ENCODE measurements at regions of chr1 and their contacts with region 1.

Region 1: GRCh38 chr1:43763497-43763973 is 56.2 kb downstream of the ST3GAL3 start:
- DNase-seq: peak; percentile 59 to 76
- ATAC-seq: peak; percentile 97
- H3K4me3 ChIP-seq: no peak overlapping the region
- H3K27ac ChIP-seq: peak overlapping the region in 2 of 4 donors; percentile 49 to 57
- H3K4me1 ChIP-seq: peaks cover 20 to 22% of the 10 kb centered on the region in 2 donors
- H3K27me3 ChIP-seq: no peaks in the 10 kb centered on the region
- CTCF ChIP-seq: peak; percentile 80 to 95 (median 85)
- POLR2A ChIP-seq: no peak

Region 2: DNA sequence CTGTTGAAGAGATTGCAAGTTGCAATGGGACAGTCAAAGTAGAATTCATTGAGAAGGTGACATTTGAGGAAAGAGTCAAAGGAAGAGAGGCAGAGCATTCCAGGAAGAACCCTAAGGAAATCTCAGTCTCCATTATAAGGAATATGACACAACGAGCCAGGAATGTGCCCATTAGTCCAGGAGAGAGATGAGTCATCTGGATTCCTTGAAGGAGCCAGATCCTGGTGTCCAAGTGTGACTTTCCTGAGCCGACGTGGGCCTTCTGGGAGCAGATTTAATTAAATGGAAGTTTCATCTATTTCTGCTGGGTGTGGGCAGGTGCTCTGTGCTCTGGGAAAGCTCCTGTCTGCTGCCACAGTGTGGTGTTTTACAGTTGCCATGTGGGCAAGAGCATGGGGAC is 58.5 kb after region 1 on chr1:
- in situ Hi-C with region 1: no loop called
- intact Hi-C with region 1: loop called (anchors 5 kb)
- DNase-seq: peak; percentile 51 to 56
- ATAC-seq: peak; percentile 100
- H3K4me3 ChIP-seq: no peak overlapping the region
- H3K27ac ChIP-seq: peak overlapping the region; percentile 9 to 54 (median 29)
- H3K4me1 ChIP-seq: peaks cover 12 to 19% of the 10 kb centered on the region in 2 donors
- H3K27me3 ChIP-seq: no peaks in the 10 kb centered on the region
- CTCF ChIP-seq: no peak
- POLR2A ChIP-seq: no peak

Region 3: DNA sequence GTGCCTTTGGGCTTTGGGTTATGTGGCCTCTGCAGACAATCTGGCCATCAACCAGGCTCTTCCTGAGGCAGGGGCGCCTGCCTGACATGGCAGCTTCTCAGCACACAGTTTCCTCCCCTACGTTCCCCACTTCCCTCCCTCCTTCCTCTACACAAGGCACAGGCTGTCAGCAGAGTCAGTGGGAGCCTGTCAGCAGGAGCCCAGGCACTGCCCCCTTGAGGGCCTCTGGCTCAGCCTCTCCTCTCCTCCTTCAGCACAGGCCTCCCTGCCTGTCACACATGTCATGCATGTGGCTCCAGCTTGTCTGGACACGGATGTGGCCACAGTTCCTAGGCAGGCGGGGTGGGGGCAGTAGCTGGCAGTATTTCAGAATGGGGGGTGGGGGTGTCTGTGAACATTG is 117.9 kb after region 1 on chr1:
- in situ Hi-C with region 1: no loop called
- intact Hi-C with region 1: loop called (anchors 5 kb)
- DNase-seq: no peak
- ATAC-seq: no peak
- H3K4me3 ChIP-seq: no peak overlapping the region
- H3K27ac ChIP-seq: peak overlapping the region; percentile 52 to 77 (median 72)
- H3K4me1 ChIP-seq: peaks cover 30 to 37% of the 10 kb centered on the region in 2 donors
- H3K27me3 ChIP-seq: no peaks in the 10 kb centered on the region
- CTCF ChIP-seq: no peak
- POLR2A ChIP-seq: no peak

Region 4: DNA sequence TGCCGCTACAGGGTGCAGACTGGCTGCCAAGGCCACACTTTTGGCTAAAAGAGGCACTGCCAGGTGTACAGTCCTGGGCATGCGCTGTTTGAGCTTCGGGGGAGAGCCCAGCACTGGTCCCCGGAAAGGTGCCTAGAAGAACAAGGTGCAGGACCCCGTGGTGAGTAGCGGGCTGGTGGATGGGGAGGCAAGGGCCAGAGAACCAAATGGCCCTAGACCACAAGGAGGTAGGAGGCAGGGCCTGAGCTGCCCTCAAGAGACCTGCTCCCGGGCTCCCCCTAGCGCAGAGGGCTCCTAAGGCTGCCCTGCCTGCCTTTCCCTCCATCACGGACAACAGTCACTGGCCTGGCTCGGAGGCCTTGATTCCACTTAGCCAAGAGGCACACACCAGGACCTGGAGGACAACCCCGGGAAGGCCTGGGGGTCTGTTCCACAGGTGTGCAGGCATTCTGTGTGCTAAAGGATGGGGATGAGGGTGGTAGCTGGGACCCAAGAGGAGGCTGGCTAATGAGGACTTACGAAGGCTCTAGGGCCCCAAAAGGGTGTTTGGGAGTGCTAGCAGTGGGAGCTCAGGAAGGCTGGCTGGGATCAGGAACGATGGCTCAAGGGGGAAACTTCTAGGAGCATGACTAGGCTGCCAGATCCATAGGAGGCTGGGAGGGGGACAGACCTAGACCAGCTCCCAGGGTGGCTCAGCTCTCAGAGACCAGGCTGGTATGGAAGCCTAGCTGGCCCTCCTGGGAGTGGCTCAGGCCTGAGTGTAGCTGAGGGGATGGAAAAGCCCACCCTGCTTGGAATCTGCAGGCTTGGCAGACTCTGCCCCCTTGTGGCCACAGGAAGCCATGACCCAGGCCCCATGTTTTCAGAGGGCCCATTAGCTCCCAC is 170.8 kb after region 1 on chr1:
- in situ Hi-C with region 1: loop called in 3 of 4 experiments (anchors 5 kb)
- intact Hi-C with region 1: loop called (anchors 1 kb)
- DNase-seq: peak in 1 of 2 donors; percentile 72
- ATAC-seq: peak; percentile 62 to 70
- H3K4me3 ChIP-seq: peak overlapping the region in 3 of 4 donors; percentile 45 to 54 (median 46)
- H3K27ac ChIP-seq: peak overlapping the region in 3 of 4 donors; percentile 2 to 39 (median 30)
- H3K4me1 ChIP-seq: peaks cover 27 to 28% of the 10 kb centered on the region in 2 donors
- H3K27me3 ChIP-seq: no peaks in the 10 kb centered on the region
- CTCF ChIP-seq: peak; percentile 75 to 93 (median 86)
- POLR2A ChIP-seq: no peak

Region 5: DNA sequence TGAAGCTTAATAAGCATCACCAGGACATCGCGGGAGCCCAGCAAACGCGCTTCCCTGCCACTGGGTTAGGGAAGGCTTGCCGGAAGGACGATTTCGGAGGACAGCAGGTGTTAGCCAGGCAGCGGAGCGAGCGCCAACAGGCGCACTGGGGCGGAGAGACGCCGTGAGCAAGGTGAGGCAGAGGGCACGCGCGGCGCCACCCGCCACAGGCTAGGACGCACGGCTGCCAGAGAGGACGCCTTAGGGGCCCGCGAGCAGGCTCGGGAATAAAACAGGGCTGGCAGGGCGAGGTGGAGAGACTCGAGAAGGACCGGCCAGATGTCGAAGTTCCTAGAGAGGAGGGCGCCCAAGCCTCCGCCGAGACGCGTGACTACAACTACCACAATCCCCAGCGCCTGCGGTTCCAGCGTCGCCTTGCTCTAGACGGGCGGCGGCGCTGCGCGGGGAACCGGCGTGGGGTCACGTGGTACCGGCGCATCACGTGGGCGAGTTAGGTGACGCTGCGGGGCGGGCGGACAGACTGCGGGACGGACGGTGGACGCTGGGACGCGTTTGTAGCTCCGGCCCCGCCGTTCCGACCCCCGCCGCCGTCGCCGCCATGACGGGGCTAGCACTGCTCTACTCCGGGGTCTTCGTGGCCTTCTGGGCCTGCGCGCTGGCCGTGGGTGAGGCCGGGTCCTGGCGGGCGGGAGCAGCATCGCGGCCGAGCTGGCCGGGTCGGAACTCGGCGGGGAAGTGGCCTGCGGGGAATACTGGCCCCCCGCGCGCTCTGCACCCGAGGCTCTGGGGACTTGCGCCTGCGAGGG is 211.1 kb after region 1 on chr1 and contains the start of gene ATP6V0B:
- in situ Hi-C with region 1: no loop called
- intact Hi-C with region 1: loop called (anchors 1 kb)
- DNase-seq: peak; percentile 95 to 96
- ATAC-seq: peak; percentile 75 to 78
- H3K4me3 ChIP-seq: peak within 1 kb of the TSS; percentile 84 to 100 (median 96)
- H3K27ac ChIP-seq: peak within 1 kb of the TSS; percentile 94 to 98 (median 97)
- H3K4me1 ChIP-seq: peaks cover 38 to 66% of the 10 kb centered on the region in 2 donors
- H3K27me3 ChIP-seq: no peaks in the 10 kb centered on the region
- CTCF ChIP-seq: peak; percentile 17 to 60 (median 37)
- POLR2A ChIP-seq: peak; percentile 95 to 98
- total RNA-seq, gene ATP6V0B: 156 to 242 (median 195) TPM

Region 6: GRCh38 chr1:44029906-44030604 is 266.5 kb after region 1 on chr1:
- in situ Hi-C with region 1: loop called in 2 of 4 experiments (anchors 25 kb)
- intact Hi-C with region 1: loop called (anchors 10 kb)
- DNase-seq: peak; percentile 82 to 85
- ATAC-seq: peak; percentile 90 to 92
- H3K4me3 ChIP-seq: peak overlapping the region; percentile 78 to 92 (median 82)
- H3K27ac ChIP-seq: peak overlapping the region; percentile 77 to 95 (median 91)
- H3K4me1 ChIP-seq: peaks cover 7 to 22% of the 10 kb centered on the region in 2 donors
- H3K27me3 ChIP-seq: no peaks in the 10 kb centered on the region
- CTCF ChIP-seq: no peak
- POLR2A ChIP-seq: peak; percentile 57 to 78

Measured in gastrocnemius medialis (tissue), 4 donors.